ENCODE measurements at regions of chr9 and their contacts with region 1.

Region 1: GRCh38 chr9:70602321-70603019 is 188.0 kb upstream of the KLF9 start:
- DNase-seq: peak; percentile 76
- H3K4me3 ChIP-seq: peak overlapping the region; percentile 14; the same call in 1 of the 2 replicates
- H3K27ac ChIP-seq: peak overlapping the region; percentile 99
- H3K27me3 ChIP-seq: no peaks in the 10 kb centered on the region
- CTCF ChIP-seq: peak; percentile 78

Region 2: DNA sequence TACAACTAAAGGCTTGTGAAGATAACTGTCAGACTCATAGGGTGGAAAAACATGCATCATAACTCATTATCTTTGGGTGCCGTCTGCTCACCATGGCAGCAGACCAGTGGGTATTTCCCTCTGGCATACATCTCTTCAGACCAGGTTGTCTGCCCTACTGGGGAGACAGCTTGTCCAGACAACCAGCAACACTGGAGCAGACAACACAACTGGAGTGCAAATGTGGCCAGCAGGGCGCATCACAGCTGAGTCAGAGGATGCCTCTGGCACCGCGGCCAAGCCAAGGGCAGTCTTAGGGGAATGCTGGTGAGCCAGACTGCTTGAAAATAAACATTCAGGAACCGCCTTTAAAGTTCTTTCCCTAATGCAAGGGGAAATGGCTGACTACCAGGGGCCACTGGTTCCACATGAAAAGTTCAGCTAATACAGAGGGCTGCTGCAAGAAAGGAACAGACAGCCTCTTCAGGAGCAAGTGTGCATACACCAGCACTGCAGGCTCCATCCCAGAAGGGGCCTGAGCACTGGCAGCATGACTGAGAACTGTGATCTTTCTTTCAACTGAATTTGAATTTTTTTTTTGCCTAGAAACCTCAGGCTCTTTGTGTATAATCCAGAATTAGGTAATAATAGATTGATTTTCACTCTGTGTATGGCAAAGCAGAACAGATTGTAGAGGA is 481.5 kb before region 1 on chr9:
- CTCF ChIA-PET with region 1: interaction called, 12 read pairs
- POLR2A ChIA-PET with region 1: no interaction called
- DNase-seq: peak; percentile 85
- H3K4me3 ChIP-seq: no peak overlapping the region
- H3K27ac ChIP-seq: peak overlapping the region; percentile 34
- H3K27me3 ChIP-seq: no peaks in the 10 kb centered on the region
- CTCF ChIP-seq: peak; percentile 55

Region 3: GRCh38 chr9:70352802-70353201 is 249.7 kb before region 1 on chr9:
- CTCF ChIA-PET with region 1: interaction called, 13 read pairs
- POLR2A ChIA-PET with region 1: no interaction called
- DNase-seq: no peak
- H3K4me3 ChIP-seq: no peak overlapping the region
- H3K27ac ChIP-seq: no peak overlapping the region
- H3K27me3 ChIP-seq: no peaks in the 10 kb centered on the region
- CTCF ChIP-seq: peak; percentile 35

Region 4: DNA sequence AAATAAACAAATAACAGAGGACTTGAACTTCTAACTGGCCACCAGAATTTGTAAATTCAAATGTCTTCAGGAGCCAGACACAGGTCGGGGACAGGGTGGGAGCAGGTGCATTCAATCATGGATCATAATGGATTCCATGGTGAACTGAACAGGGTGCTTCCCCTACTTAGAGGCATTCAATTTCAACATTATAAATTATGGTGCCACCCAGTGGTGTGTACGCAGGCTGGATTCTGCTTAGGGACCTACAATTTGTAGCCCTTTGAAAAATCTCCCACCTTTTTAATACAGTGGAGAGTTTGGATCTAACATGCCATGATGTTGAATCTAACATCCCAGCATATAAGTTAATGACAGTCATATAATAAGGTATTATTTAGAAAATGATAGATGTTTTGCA is 210.3 kb before region 1 on chr9:
- CTCF ChIA-PET with region 1: interaction called, 11 read pairs
- POLR2A ChIA-PET with region 1: no interaction called
- DNase-seq: no peak
- H3K4me3 ChIP-seq: no peak overlapping the region
- H3K27ac ChIP-seq: no peak overlapping the region
- H3K27me3 ChIP-seq: no peaks in the 10 kb centered on the region
- CTCF ChIP-seq: 0 out of 2 replicates have a peak, but pooled peaks have one; percentile 19

Region 5: GRCh38 chr9:70413798-70414775 is 188.4 kb before region 1 on chr9 and contains the start of gene KLF9:
- CTCF ChIA-PET with region 1: interaction called, 25 read pairs
- POLR2A ChIA-PET with region 1: interaction called, 73 read pairs
- DNase-seq: peak; percentile 92
- H3K4me3 ChIP-seq: peak within 1 kb of the TSS; percentile 98
- H3K27ac ChIP-seq: peak within 1 kb of the TSS; percentile 100
- H3K27me3 ChIP-seq: no peaks in the 10 kb centered on the region
- CTCF ChIP-seq: no peak
- polyA plus RNA-seq, gene KLF9: 13.2 and 14.9 TPM in 2 replicates

Region 6: DNA sequence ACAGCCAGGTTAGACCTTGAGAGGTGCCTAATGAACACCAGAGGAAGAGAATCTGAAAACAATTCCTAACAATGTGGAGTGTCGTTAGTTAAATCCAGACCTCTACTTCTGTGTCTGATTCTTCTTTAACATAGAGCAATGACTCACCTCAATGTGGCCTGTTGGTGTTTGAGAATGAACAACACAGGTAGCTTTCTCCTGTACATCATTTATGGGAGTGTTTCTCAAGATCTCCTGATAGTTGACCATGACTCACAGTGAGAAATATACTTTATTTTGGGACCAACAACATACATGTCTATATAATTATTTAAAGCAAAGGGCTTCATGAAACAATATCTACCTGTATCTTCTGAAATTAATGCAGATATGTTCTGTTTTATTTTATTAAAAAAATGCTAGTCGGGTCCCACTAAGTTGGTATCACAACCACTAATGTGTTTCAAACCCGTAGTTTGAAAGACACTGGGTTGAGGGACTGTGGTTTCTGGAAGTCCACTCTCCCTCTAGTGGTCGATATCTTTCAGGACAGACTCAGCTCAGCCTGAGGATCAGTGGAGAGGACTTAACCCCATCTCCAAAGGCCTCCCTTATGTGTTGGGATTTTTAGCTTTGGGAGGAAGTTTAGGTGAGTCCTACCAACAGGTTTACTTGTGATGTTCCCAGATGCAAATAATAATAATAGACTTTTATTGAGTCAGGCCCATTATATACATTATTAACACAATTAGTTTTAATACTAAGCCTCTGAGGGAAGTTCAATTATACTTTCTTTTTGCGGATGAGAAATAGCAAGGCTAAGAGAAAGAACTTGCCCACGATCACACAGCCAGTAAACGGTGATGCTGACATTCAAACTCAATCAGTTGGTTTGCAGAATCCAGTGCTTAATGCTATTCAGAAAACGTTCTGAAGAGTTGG is 118.0 kb before region 1 on chr9:
- CTCF ChIA-PET with region 1: interaction called, 12 read pairs
- POLR2A ChIA-PET with region 1: interaction called, 6 read pairs
- DNase-seq: peak; percentile 43
- H3K4me3 ChIP-seq: no peak overlapping the region
- H3K27ac ChIP-seq: no peak overlapping the region
- H3K27me3 ChIP-seq: no peaks in the 10 kb centered on the region
- CTCF ChIP-seq: peak; percentile 87